Dorsolateral prefrontal cortex (tissue), 120 donors: ENCODE measurements at regions of chr1 and their contacts with region 1.

Region 1: DNA sequence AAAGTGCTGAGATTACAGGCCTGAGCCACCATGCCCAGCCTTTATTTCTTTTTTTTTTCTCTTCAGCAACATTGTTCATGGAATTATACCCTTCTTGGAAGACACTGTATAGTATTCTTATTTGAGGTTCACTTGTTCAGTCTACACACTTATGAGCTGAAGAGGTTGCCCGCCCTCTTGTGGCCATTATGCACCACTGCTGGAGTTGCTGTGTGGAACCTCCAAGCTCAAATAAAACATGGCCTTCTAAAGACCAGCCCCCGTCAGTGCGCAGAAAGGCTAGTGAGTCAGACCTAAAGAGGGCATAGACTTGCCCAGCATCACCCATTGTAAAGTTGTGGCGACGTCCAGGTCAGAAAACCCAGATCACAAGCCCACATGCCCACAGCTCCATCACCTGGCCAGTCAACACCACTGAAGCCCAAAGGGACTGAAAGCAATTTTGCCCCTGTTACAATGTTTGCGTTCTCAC is 20.4 kb downstream of the LURAP1 start:
- DNase-seq: peak; percentile 63 to 87 (median 80)
- H3K4me3 ChIP-seq: no peak overlapping the region
- H3K27ac ChIP-seq: peak overlapping the region in 58 of 59 donors; percentile 69 to 100 (median 94)
- H3K27me3 ChIP-seq: no peaks in the 10 kb centered on the region
- CTCF ChIP-seq: peak; percentile 71 to 98 (median 94)

Region 2: GRCh38 chr1:45815667-45816458 is 407.6 kb before region 1 on chr1:
- intact Hi-C with region 1: no loop called
- DNase-seq: no peak
- H3K4me3 ChIP-seq: no peak overlapping the region
- H3K27ac ChIP-seq: no peak overlapping the region
- H3K27me3 ChIP-seq: no peaks in the 10 kb centered on the region
- CTCF ChIP-seq: no peak

Region 3: GRCh38 chr1:46036894-46037839 is 186.3 kb before region 1 on chr1:
- intact Hi-C with region 1: loop called (anchors 2 kb)
- DNase-seq: peak; percentile 79 to 93 (median 90)
- H3K4me3 ChIP-seq: no peak overlapping the region
- H3K27ac ChIP-seq: peak overlapping the region in 13 of 59 donors; percentile 2 to 62 (median 30)
- H3K27me3 ChIP-seq: no peaks in the 10 kb centered on the region
- CTCF ChIP-seq: peak; percentile 94 to 100 (median 99)

Region 4: GRCh38 chr1:46132529-46133180 is 90.9 kb before region 1 on chr1 and contains the start of gene PIK3R3:
- intact Hi-C with region 1: loop called in 1 of 2 experiments (anchors 5 kb)
- DNase-seq: peak; percentile 93 to 99 (median 98)
- H3K4me3 ChIP-seq: peak within 1 kb of the TSS; percentile 55 to 97 (median 79)
- H3K27ac ChIP-seq: peak within 1 kb of the TSS; percentile 62 to 99 (median 96)
- H3K27me3 ChIP-seq: peaks cover 0 to 18% (median 0%) of the 10 kb centered on the region in 45 donors
- CTCF ChIP-seq: peak in 31 of 56 donors; percentile 10 to 55 (median 26)
- total RNA-seq, gene PIK3R3: 17.6 to 51.8 (median 34.2) TPM

Region 5: GRCh38 chr1:46179138-46180081 is 44.1 kb before region 1 on chr1:
- intact Hi-C with region 1: loop called (anchors 1 to 5 kb)
- DNase-seq: peak; percentile 52 to 89 (median 83)
- H3K4me3 ChIP-seq: peak overlapping the region in 14 of 59 donors; percentile 0 to 34 (median 17)
- H3K27ac ChIP-seq: peak overlapping the region in 5 of 59 donors; percentile 2 to 60 (median 11)
- H3K27me3 ChIP-seq: no peaks in the 10 kb centered on the region
- CTCF ChIP-seq: peak; percentile 70 to 97 (median 92)

Region 6: GRCh38 chr1:46197964-46198811 is 25.3 kb before region 1 on chr1 and contains the start of gene POMGNT1:
- intact Hi-C with region 1: loop called in 1 of 2 experiments (anchors 2 kb)
- DNase-seq: peak in 6 of 10 donors; percentile 39 to 86 (median 65)
- H3K4me3 ChIP-seq: peak within 1 kb of the TSS; percentile 64 to 92 (median 85)
- H3K27ac ChIP-seq: peak within 1 kb of the TSS; percentile 58 to 98 (median 90)
- H3K27me3 ChIP-seq: no peaks in the 10 kb centered on the region
- CTCF ChIP-seq: peak in 8 of 56 donors; percentile 8 to 28 (median 18)
- total RNA-seq, gene POMGNT1: 58.7 to 145 (median 92.1) TPM

Region 7: GRCh38 chr1:46303038-46303871 is 79.7 kb after region 1 on chr1 and contains the starts of genes LRRC41 and UQCRH:
- intact Hi-C with region 1: loop called in 1 of 2 experiments (anchors 5 kb)
- DNase-seq: peak; percentile 95 to 99 (median 97)
- H3K4me3 ChIP-seq: peak within 1 kb of the TSS; percentile 63 to 99 (median 93)
- H3K27ac ChIP-seq: peak within 1 kb of the TSS; percentile 58 to 99 (median 96)
- H3K27me3 ChIP-seq: no peaks in the 10 kb centered on the region
- CTCF ChIP-seq: peak in 21 of 56 donors; percentile 4 to 49 (median 14)
- total RNA-seq, gene LRRC41: 42.8 to 67.4 (median 56.1) TPM
- total RNA-seq, gene UQCRH: 114 to 365 (median 249) TPM

Region 8: DNA sequence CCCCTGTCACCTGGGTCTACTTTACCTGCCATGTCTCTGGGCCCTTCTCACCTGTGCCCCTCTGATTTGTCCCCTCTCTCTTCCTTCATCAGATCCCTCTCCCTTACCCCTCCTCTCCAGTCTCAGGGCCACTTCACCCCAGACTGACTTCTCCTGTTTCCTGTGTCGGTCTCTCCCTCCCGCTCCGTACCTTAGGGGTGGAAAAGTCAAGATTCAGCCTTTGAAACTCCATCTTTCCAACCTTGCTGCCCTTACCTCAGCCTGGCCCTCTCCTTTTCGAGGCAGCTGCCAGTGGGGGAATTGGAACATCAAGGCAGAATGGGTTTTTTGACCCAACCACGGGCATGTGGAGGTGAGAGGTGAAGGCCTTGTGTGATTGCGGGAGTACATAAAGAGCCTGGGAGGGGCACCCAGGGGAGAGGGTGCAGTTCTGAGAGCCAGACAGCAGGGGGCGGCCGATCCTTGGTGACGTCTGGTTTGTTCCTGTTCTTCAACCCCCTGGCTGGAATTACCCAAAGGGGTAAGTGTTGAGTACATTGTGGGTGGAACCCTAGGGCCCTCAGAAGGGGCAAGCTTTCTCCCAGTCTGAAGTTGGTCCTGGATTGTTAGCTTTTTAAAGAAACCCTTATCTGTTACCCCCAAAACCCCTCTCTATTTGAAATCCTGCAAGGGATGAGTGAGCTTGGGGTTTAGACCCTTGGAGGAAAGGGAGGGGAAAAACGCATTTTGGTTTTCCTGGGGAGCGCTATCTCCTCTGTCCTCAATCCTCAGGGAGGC is 253.8 kb after region 1 on chr1:
- intact Hi-C with region 1: no loop called
- DNase-seq: peak; percentile 59 to 84 (median 77)
- H3K4me3 ChIP-seq: no peak overlapping the region
- H3K27ac ChIP-seq: no peak overlapping the region
- H3K27me3 ChIP-seq: peaks cover 0 to 33% (median 0%) of the 10 kb centered on the region in 45 donors
- CTCF ChIP-seq: peak; percentile 46 to 95 (median 88)